ENCODE measurements at regions of chr16 and their contacts with region 1.

Region 1: GRCh38 chr16:71826533-71827017 is 17.9 kb upstream of the AP1G1 start:
- DNase-seq: no peak
- H3K4me3 ChIP-seq: no peak overlapping the region
- H3K27me3 ChIP-seq: no peaks in the 10 kb centered on the region
- CTCF ChIP-seq: no peak

Region 2: GRCh38 chr16:71734511-71734910 is 92.1 kb before region 1 on chr16:
- CTCF ChIA-PET with region 1: no interaction called
- POLR2A ChIA-PET with region 1: interaction called, 11 read pairs
- DNase-seq: no peak
- H3K4me3 ChIP-seq: no peak overlapping the region
- H3K27me3 ChIP-seq: no peaks in the 10 kb centered on the region
- CTCF ChIP-seq: no peak